Activated naive CD4-positive, alpha-beta T cell treated with anti-CD3 and anti-CD28 coated beads for 36 hours (primary cell): ENCODE measurements at regions of chr14 and their contacts with region 1.

Region 1: DNA sequence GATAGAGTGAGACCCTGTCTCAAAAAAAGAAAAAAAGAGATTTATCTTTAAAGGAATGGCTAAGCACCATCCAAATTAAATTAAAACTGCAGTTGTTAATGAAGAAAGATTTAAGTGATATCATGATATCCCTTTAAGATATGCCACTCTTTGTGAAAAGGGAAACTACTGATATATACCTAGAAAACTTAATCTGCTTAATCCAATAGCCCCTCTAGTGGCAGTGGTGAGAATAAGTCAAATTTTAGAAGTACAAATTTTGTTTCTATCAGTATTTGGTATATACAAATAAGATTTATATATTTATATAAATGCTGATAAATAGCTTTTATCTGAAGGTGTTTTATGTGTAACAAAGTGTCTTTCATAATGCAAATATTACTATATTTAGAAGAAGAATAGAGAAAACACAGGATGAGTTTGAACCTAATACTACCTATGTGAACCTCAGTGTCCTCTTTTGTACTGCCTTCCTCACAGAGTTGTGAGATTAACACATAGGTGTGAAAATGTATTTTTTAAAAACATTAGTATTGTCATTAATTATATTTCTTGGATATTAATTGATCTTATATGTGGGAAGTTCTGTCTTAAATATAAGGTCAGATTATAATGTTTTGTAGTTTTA is 51.4 kb upstream of the GARIN2 start:
- DNase-seq: no peak
- H3K4me3 Mint-ChIP-seq: no peak overlapping the region
- H3K27ac Mint-ChIP-seq: no peak overlapping the region
- H3K4me1 Mint-ChIP-seq: peaks cover 28% of the 10 kb centered on the region
- H3K27me3 Mint-ChIP-seq: no peaks in the 10 kb centered on the region

Region 2: DNA sequence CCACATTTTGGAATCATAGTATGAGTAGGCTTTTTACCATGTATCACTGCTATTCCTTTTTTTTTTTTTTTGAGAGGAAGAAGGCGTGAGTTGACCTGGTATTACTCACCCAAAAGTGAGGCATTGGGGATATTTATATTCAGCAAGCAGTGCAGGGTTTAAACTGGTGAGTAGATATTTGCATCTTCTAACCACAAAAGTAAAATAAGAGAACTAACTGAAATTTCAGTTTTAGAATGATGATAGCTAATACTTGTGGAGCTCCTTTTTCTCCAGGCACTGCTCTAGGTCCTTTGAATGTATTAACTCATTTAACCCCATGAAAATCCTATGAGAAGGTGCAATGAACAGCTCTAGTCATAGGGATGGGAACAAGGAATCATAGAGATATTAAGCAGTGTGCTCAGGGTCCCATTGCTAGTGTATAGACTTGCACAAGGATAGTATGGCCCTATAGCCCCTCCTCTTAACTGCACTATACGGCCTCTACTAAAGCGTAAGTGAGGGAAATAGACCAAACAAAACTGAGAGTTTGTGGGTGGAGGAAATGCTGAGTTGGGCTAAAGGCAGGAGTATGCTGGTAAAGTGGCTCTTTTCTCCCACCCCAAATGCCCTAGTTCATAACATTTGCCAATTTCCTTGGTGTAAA is 1931.3 kb before region 1 on chr14:
- CTCF ChIA-PET with region 1: no interaction called
- intact Hi-C with region 1: loop called (anchors 1 kb)
- DNase-seq: peak; percentile 29
- H3K4me3 Mint-ChIP-seq: peak overlapping the region; percentile 6
- H3K27ac Mint-ChIP-seq: peak overlapping the region; percentile 71
- H3K4me1 Mint-ChIP-seq: peaks cover 62% of the 10 kb centered on the region
- H3K27me3 Mint-ChIP-seq: peaks cover 3% of the 10 kb centered on the region

Region 3: GRCh38 chr14:66403183-66403582 is 734.7 kb before region 1 on chr14:
- CTCF ChIA-PET with region 1: no interaction called
- intact Hi-C with region 1: loop called (anchors 5 kb)
- DNase-seq: no peak
- H3K4me3 Mint-ChIP-seq: no peak overlapping the region
- H3K27ac Mint-ChIP-seq: no peak overlapping the region
- H3K4me1 Mint-ChIP-seq: peaks cover 4% of the 10 kb centered on the region
- H3K27me3 Mint-ChIP-seq: no peaks in the 10 kb centered on the region

Region 4: DNA sequence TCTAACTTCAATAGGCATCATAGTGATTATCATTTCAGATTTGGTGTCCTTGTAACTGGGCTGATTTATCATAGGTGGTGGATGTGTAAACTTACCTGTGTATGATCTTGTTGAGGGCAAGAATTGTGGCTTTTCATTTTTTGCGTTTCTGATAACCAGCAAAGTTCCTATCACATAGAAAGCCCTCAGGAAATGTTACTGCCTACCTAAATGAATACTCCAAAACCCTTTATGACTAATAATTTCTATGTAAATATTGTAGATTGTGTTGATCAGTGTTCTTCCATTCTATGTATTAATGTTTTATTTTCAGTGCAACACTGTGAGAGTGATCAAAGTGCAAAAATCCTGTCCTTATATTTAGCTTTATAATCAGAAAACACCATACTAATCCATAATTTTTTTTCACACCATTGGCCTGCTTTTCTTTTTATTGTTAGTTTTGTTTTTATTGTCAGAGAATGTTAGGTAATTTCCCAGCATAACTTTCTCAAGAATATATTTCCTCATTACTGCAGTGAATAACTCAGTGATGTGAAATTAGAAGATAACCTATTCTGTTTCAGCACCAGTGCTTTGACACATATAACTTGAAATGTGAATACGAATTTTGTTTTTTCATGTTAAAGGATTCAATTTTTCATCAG is 535.8 kb before region 1 on chr14:
- CTCF ChIA-PET with region 1: no interaction called
- intact Hi-C with region 1: loop called (anchors 2 kb)
- DNase-seq: no peak
- H3K4me3 Mint-ChIP-seq: no peak overlapping the region
- H3K27ac Mint-ChIP-seq: no peak overlapping the region
- H3K4me1 Mint-ChIP-seq: peaks cover 20% of the 10 kb centered on the region
- H3K27me3 Mint-ChIP-seq: no peaks in the 10 kb centered on the region

Region 5: DNA sequence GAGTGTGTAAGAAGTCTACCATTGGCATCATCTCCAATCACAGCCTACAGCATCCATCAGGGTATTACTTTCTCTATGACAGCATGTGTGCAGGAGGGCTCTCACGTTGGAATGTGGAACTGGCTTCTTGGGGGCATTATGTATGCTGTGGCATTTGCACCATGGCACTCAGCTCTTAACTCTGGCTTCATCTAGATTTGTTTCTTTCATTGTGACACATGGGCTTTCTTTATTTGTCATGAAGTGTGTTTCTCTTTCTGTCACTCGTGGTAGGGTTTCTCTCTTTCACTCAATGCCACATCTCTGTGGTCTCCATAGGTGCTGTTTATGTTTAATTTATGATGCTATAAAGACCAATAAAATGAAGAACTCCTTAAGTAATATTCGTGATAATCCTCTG is 139.8 kb before region 1 on chr14:
- CTCF ChIA-PET with region 1: no interaction called
- intact Hi-C with region 1: loop called (anchors 1 kb)
- DNase-seq: peak; percentile 8
- H3K4me3 Mint-ChIP-seq: no peak overlapping the region
- H3K27ac Mint-ChIP-seq: no peak overlapping the region
- H3K4me1 Mint-ChIP-seq: peaks cover 9% of the 10 kb centered on the region
- H3K27me3 Mint-ChIP-seq: no peaks in the 10 kb centered on the region

Region 6: GRCh38 chr14:67199016-67199415 is 61.2 kb after region 1 on chr14:
- CTCF ChIA-PET with region 1: no interaction called
- intact Hi-C with region 1: no loop called
- DNase-seq: no peak
- H3K4me3 Mint-ChIP-seq: no peak overlapping the region
- H3K27ac Mint-ChIP-seq: no peak overlapping the region
- H3K4me1 Mint-ChIP-seq: no peaks in the 10 kb centered on the region
- H3K27me3 Mint-ChIP-seq: peaks cover 5% of the 10 kb centered on the region

Region 7: DNA sequence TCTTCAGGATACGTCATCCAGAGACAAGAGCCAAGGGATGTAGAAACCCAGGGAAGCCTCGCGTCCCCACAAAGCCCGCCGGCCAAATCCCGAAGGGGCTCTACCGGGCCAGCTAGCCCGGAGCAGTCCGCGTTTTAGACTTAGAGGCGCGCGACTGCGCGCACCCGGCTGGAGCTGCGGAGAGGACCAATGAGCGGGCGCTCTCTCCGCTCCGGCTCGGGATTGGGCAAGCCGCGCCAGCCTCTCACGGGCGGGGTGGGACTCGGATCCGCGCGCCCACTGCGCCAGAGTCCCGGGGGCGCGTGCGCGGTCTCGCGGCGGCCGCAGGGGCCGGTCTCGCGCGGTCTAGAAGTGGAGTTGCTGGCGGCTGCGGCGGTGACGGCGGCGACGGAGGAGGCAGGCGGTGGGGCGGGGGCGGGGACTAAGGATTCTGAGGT is 103.1 kb after region 1 on chr14:
- CTCF ChIA-PET with region 1: no interaction called
- intact Hi-C with region 1: loop called (anchors 1 kb)
- DNase-seq: peak; percentile 94
- H3K4me3 Mint-ChIP-seq: peak overlapping the region; percentile 85
- H3K27ac Mint-ChIP-seq: peak overlapping the region; percentile 86
- H3K4me1 Mint-ChIP-seq: peaks cover 19% of the 10 kb centered on the region
- H3K27me3 Mint-ChIP-seq: peaks cover 2% of the 10 kb centered on the region

Region 8: GRCh38 chr14:67311905-67312304 is 174.0 kb after region 1 on chr14:
- CTCF ChIA-PET with region 1: no interaction called
- intact Hi-C with region 1: no loop called
- DNase-seq: no peak
- H3K4me3 Mint-ChIP-seq: no peak overlapping the region
- H3K27ac Mint-ChIP-seq: no peak overlapping the region
- H3K4me1 Mint-ChIP-seq: no peaks in the 10 kb centered on the region
- H3K27me3 Mint-ChIP-seq: no peaks in the 10 kb centered on the region